ENCODE measurements at regions of chr18 and their contacts with region 1.

Region 1: DNA sequence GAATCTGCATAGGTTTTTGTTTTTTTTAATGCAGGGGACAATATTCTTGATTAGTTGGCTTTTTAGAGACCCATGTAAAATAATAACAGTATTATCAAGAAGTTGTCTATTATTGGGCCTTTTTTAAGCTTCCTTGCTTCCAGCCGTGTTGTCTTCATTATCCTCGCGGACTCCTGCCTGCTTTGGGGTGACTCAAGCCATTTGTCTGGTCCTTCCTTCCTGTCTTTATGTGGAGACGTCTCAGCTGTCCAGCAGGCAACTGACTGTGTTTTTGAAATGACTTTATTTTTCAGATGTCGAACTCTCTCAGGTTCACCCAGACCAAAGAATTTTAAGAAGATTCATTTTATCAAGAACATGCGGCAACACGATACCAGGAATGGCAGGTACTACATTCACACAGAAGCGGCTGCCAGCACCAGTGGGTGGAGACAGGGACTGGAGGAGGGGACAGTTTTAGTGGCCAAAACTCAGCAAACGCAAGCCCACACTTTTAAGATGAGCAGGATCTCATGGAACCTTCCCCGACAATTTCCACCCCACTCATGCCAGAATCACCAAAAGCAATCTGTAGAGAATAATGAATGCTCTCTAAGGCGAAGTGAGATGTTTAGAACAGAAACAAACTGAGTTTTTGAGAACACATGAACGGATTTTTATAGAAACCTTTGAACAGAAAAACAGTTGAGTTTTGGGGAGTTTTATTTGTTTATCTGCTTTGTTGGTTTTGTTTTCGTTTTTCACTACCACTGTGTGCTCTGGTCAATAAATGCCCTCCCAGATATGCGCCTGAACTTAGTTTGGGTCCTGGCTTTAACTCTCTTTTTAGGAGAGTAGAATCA is 59.1 kb downstream of the CABLES1 start:
- H3K4me3 ChIP-seq: no peak overlapping the region
- H3K27ac ChIP-seq: no peak overlapping the region
- H3K4me1 ChIP-seq: peaks cover 2% of the 10 kb centered on the region; the same call in 1 of the 2 replicates
- CTCF ChIP-seq: no peak

Region 2: GRCh38 chr18:23183411-23184155 is 10.8 kb before region 1 on chr18:
- CTCF ChIA-PET with region 1: no interaction called
- POLR2A ChIA-PET with region 1: no interaction called
- H3K4me3 ChIP-seq: no peak overlapping the region
- H3K27ac ChIP-seq: no peak overlapping the region
- H3K4me1 ChIP-seq: no peaks in the 10 kb centered on the region
- CTCF ChIP-seq: no peak

Region 3: DNA sequence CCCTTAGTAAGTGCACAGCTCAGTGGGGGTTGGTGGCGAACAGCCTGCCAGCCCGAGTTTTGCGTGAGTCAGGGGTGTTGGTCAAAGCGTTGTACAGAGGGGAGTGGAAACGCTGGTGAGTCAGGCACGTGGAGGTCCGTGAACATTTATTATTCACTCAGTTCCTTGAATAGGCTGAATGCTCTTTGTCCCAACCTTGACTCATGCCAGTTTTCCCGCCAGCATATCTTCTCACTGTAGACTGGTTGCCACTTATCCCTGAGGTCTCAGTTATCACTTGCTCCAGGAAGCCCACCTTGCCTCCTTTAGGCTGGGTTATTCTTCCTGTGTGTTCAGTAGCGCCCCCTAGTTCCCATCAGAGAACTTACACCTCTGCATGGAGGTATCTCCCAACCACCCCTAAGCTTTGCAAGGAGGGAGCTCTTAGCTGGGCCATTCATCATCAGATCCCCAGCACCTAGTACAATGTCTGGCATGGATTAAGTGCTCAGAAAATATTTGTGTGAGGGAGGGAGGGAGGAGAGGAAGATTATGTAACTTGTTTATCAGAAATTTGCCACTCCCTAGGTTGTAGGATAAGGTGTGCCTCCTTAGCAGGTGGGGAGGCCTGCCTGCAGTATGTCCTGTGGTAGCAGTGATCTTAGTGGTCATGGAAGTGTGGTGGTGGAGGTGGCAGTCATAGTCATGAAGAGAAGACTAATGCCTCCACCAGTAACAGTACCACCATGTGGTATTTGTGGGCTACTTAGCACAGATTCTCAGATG is 13.0 kb after region 1 on chr18:
- CTCF ChIA-PET with region 1: interaction called, 21 read pairs
- POLR2A ChIA-PET with region 1: no interaction called
- H3K4me3 ChIP-seq: no peak overlapping the region
- H3K27ac ChIP-seq: no peak overlapping the region
- H3K4me1 ChIP-seq: no peaks in the 10 kb centered on the region
- CTCF ChIP-seq: no peak

Measured in HEK293 (cell line).